ENCODE measurements at regions of chr3 and their contacts with region 1.

Region 1: GRCh38 chr3:52070724-52071621 is 14.6 kb upstream of the DUSP7 start:
- DNase-seq: peak; percentile 84
- H3K4me3 ChIP-seq: no peak overlapping the region
- H3K27ac ChIP-seq: peak overlapping the region; percentile 66 to 76 (median 72)
- H3K4me1 ChIP-seq: peaks cover 0 to 18% (median 15%) of the 10 kb centered on the region in 4 donors
- H3K27me3 ChIP-seq: no peaks in the 10 kb centered on the region
- CTCF ChIP-seq: no peak
- EP300 ChIP-seq: no peak
- POLR2A ChIP-seq: no peak

Region 2: DNA sequence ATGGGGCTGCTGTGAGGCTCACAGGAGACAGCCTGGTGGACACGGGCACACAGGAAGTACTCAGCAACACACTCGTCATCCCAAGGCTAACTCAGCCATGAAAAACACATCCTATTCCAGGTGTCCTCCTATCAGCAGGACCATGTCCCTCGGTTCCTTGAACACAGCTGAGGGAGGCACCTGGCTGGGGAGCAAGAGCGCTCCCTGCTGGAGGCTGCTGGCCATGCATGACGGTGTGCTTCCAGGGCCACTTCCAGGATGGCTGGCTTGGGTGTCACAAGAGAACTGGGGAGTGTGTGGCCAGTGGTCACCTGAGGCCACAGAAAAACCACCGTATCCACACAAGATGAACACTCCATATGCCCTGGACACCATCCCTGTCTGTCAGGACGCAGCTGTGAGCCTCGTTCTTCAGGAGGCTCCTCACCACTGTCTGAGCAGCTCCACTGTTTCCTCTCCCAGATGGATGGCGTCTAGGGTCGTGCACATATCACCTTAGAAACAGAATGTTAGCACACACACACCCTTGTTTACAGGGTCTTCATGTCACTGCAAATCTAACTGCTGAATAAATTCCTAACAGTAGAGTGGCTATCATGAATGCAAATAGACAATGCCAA is 52.2 kb after region 1 on chr3:
- intact Hi-C with region 1: loop called (anchors 5 kb)
- DNase-seq: peak; percentile 84
- H3K4me3 ChIP-seq: no peak overlapping the region
- H3K27ac ChIP-seq: no peak overlapping the region
- H3K4me1 ChIP-seq: peaks cover 0 to 14% (median 5%) of the 10 kb centered on the region in 4 donors
- H3K27me3 ChIP-seq: no peaks in the 10 kb centered on the region
- CTCF ChIP-seq: peak; percentile 91 to 94 (median 93)
- EP300 ChIP-seq: no peak
- POLR2A ChIP-seq: no peak